GM10248 (cell line): ENCODE measurements at regions of chr1 and their contacts with region 1.

Region 1: DNA sequence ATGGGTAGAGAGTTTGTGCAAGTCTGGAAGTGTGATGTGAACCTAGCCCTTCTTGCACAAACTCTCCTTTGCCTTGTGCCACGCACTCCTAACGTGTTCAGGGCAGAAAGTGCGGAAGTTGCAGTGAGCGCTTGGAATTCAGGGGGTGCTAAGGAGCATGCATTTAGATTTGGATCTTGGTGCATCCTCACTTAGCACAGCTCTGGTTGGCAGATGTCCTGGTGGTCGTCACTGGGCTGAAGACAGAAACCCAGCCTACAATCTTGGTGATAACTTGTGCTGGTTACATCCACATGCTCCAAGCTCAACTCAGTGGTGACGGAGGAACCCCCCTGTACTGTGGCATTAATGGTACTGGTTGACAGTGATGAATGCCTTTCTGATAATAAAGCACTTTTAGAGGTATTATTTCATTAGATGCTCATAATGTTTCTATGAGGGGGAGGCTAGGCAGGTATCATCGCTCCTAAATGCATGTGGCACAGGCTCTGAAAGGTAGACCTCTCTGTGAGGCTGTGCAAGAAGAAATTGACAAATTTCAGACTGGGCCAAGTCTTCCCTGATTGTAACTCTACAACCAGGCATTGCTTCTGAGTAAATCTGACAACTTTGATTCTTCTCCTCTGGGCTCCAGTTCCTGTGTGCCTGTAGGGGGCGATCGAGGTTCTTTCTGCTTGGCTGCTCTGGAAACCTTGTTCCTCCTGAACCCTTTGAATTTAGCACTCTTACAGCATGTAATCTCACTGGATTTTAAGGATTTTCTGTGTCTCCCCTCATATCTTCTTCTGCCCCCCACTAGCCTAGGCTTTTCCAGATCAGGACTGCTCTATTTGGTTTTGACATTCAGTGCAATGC is 40.6 kb downstream of the MAPKAPK2 start:
- DNase-seq: peak; percentile 71
- CTCF ChIP-seq: peak; percentile 75

Region 2: GRCh38 chr1:206693029-206693428 is 32.3 kb before region 1 on chr1:
- CTCF ChIA-PET with region 1: interaction called, 54 read pairs
- POLR2A ChIA-PET with region 1: no interaction called
- DNase-seq: no peak
- CTCF ChIP-seq: no peak

Region 3: DNA sequence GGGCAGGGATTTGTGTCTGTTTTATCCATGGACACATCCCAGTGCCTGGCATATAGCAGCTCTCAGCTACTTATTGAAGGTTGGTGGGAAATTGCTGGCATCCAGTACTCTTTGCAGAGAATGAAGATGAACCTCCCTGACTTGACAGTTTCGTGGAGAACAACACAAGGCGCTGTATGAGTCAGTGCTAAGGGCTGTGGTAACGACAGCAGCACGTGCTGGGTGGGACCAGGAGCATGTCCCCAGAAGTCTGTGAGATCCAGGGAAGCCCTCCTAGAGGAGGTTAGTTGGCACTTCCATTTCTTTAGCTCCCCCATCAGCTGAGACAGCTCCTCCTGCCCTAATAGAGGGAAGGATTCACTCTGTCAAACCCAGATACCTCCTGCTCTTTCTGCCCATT is 19.3 kb after region 1 on chr1:
- CTCF ChIA-PET with region 1: interaction called, 23 read pairs
- POLR2A ChIA-PET with region 1: no interaction called
- DNase-seq: no peak
- CTCF ChIP-seq: no peak

Region 4: DNA sequence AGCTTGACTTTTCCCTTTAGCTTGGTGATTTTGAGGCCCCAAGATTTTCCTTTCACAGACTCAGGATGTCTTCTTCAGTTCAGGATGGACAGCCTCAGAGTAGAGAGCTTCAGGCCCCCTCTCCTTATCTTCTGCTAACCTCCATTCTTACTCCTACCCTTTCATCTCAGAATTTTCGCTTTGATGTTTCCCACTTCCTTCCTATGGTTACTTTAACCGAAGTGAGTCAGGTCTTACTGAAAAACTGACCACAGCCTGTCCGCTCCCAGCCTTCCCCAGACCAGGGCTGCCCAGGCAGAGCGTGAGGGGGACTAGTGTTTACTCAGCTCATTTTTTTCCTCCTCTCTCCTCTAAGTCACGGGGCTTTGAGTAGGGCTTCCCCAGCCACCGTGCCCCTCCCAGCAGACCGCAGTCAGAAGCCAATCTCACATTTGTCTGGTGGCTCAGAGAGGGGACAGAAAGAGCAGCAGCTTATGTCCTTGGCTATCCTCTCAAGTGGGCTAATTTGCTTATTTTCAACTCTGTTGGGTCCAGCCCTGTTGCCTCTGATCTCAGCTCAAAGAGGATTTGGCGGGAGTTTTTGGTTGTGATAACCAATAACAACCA is 41.0 kb after region 1 on chr1:
- CTCF ChIA-PET with region 1: interaction called, 60 read pairs
- POLR2A ChIA-PET with region 1: no interaction called
- DNase-seq: peak; percentile 57
- CTCF ChIP-seq: no peak

Region 5: GRCh38 chr1:206826405-206826804 is 101.1 kb after region 1 on chr1:
- CTCF ChIA-PET with region 1: interaction called, 20 read pairs
- POLR2A ChIA-PET with region 1: no interaction called
- DNase-seq: no peak
- CTCF ChIP-seq: no peak

Region 6: GRCh38 chr1:206918076-206918475 is 192.7 kb after region 1 on chr1:
- CTCF ChIA-PET with region 1: interaction called, 68 read pairs
- POLR2A ChIA-PET with region 1: no interaction called
- DNase-seq: no peak
- CTCF ChIP-seq: no peak